ENCODE measurements at regions of chr17 and their contacts with region 1.

Region 1: DNA sequence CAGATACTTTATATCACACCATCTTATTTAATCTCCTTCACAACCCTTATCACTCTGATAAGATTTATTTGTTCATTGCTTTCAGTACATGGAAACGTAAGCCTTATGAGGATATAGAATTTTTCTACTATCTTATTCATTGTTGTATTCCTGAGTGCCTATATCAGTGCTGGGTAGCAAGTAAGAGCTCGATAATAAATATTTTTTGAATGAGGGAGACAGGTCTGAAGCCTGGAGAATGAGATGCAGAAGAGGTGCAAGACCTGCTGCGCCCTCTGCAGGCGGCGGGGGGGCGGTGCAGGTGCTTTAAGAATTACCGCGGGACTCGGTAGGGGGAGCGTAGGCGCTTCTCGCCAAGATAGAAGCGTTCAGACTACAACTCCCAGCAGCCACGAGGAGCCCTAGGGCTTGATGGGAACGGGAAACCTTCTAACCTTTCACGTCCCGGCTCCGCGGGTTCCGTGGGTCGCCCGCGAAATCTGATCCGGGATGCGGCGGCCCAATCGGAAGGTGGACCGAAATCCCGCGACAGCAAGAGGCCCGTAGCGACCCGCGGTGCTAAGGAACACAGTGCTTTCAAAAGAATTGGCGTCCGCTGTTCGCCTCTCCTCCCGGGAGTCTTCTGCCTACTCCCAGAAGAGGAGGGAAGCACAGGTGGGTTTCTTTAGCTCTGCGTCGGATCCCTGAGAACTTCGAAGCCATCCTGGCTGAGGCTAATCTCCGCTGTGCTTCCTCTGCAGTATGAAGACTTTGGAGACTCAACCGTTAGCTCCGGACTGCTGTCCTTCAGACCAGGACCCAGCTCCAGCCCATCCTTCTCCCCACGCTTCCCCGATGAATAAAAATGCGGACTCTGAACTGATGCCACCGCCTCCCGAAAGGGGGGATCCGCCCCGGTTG is at the start of gene WRAP53:
- DNase-seq: peak; percentile 95 to 97 (median 96)
- H3K4me3 ChIP-seq: peak within 1 kb of the TSS; percentile 100
- H3K4me3 Mint-ChIP-seq: peak within 1 kb of the TSS; percentile 93 to 98 (median 96)
- H3K27ac ChIP-seq: peak within 1 kb of the TSS; percentile 99
- H3K27ac Mint-ChIP-seq: peak within 1 kb of the TSS; percentile 98 to 100 (median 99)
- H3K4me1 ChIP-seq: peaks cover 40% of the 10 kb centered on the region
- H3K4me1 Mint-ChIP-seq: peaks cover 18 to 53% (median 40%) of the 10 kb centered on the region in 4 donors
- H3K27me3 ChIP-seq: no peaks in the 10 kb centered on the region
- H3K27me3 Mint-ChIP-seq: no peaks in the 10 kb centered on the region
- total RNA-seq, gene WRAP53: 11.9 to 12.5 TPM

Region 2: GRCh38 chr17:7095625-7096024 is 592.5 kb before region 1 on chr17:
- CTCF ChIA-PET with region 1: no interaction called
- POLR2A ChIA-PET with region 1: no interaction called
- intact Hi-C with region 1: no loop called
- DNase-seq: no peak
- H3K4me3 ChIP-seq: no peak overlapping the region
- H3K4me3 Mint-ChIP-seq: no peak overlapping the region
- H3K27ac ChIP-seq: no peak overlapping the region
- H3K27ac Mint-ChIP-seq: no peak overlapping the region
- H3K4me1 ChIP-seq: no peaks in the 10 kb centered on the region
- H3K4me1 Mint-ChIP-seq: peaks cover 2 to 8% (median 5%) of the 10 kb centered on the region in 4 donors
- H3K27me3 ChIP-seq: peaks cover 3% of the 10 kb centered on the region
- H3K27me3 Mint-ChIP-seq: peaks cover 16 to 17% of the 10 kb centered on the region in 2 donors

Region 3: GRCh38 chr17:7280519-7281429 is 407.4 kb before region 1 on chr17:
- CTCF ChIA-PET with region 1: no interaction called
- POLR2A ChIA-PET with region 1: interaction called, 3 read pairs
- intact Hi-C with region 1: loop called (anchors 1 kb)
- DNase-seq: peak; percentile 82 to 86 (median 85)
- H3K4me3 ChIP-seq: peak overlapping the region; percentile 23 to 58
- H3K4me3 Mint-ChIP-seq: peak overlapping the region; percentile 77 to 90 (median 82)
- H3K27ac ChIP-seq: peak overlapping the region; percentile 41
- H3K27ac Mint-ChIP-seq: peak overlapping the region; percentile 36 to 84 (median 66)
- H3K4me1 ChIP-seq: peaks cover 25% of the 10 kb centered on the region
- H3K4me1 Mint-ChIP-seq: peaks cover 4 to 28% (median 18%) of the 10 kb centered on the region in 4 donors
- H3K27me3 ChIP-seq: peaks cover 10% of the 10 kb centered on the region
- H3K27me3 Mint-ChIP-seq: peaks cover 15 to 19% of the 10 kb centered on the region in 2 donors

Region 4: GRCh38 chr17:7403977-7404736 is 284.0 kb before region 1 on chr17 and contains the start of gene TMEM256:
- CTCF ChIA-PET with region 1: no interaction called
- POLR2A ChIA-PET with region 1: interaction called, 11 read pairs
- intact Hi-C with region 1: loop called (anchors 1 kb)
- DNase-seq: peak; percentile 91 to 98 (median 94)
- H3K4me3 ChIP-seq: peak within 1 kb of the TSS; percentile 73 to 77
- H3K4me3 Mint-ChIP-seq: peak within 1 kb of the TSS; percentile 93 to 98 (median 97)
- H3K27ac ChIP-seq: peak within 1 kb of the TSS; percentile 51
- H3K27ac Mint-ChIP-seq: peak within 1 kb of the TSS; percentile 89 to 99 (median 98)
- H3K4me1 ChIP-seq: peaks cover 17% of the 10 kb centered on the region
- H3K4me1 Mint-ChIP-seq: peaks cover 16 to 40% (median 18%) of the 10 kb centered on the region in 4 donors
- H3K27me3 ChIP-seq: no peaks in the 10 kb centered on the region
- H3K27me3 Mint-ChIP-seq: peaks cover 2% of the 10 kb centered on the region in 2 donors
- total RNA-seq, gene TMEM256: 35.4 to 38.3 TPM

Region 5: GRCh38 chr17:7561028-7561575 is 127.1 kb before region 1 on chr17:
- CTCF ChIA-PET with region 1: interaction called, 8 read pairs
- POLR2A ChIA-PET with region 1: interaction called, 38 read pairs
- intact Hi-C with region 1: loop called (anchors 1 kb)
- DNase-seq: peak; percentile 75 to 85 (median 76)
- H3K4me3 ChIP-seq: peak overlapping the region; percentile 72 to 84
- H3K4me3 Mint-ChIP-seq: peak overlapping the region; percentile 89 to 98 (median 94)
- H3K27ac ChIP-seq: peak overlapping the region; percentile 96
- H3K27ac Mint-ChIP-seq: peak overlapping the region; percentile 95 to 99 (median 97)
- H3K4me1 ChIP-seq: peaks cover 37% of the 10 kb centered on the region
- H3K4me1 Mint-ChIP-seq: peaks cover 25 to 37% (median 30%) of the 10 kb centered on the region in 4 donors
- H3K27me3 ChIP-seq: no peaks in the 10 kb centered on the region
- H3K27me3 Mint-ChIP-seq: no peaks in the 10 kb centered on the region

Region 6: DNA sequence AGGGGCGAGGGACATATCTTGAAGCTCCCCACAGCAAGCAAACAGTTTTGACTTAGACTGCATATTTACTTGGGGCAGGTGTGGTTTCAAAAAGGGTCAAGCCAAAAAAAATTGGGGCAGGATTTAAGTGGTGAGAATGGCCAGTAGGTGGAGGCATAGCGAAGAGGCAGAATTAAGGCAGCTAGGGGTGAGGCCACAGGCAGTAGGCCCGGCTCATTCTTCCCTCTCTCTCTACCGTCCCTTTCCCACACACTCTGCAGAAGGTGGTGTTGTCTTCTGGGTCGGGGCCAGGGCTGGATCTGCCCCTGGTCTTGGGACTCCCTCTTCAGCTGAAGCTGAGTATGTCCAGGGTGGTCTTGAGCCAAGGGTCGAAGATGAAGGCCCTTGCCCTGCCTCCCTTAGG is 55.7 kb before region 1 on chr17:
- CTCF ChIA-PET with region 1: interaction called, 56 read pairs
- POLR2A ChIA-PET with region 1: interaction called, 84 read pairs
- intact Hi-C with region 1: loop called (anchors 1 kb)
- DNase-seq: peak in 4 of 5 donors; percentile 19 to 36 (median 30)
- H3K4me3 ChIP-seq: no peak overlapping the region
- H3K4me3 Mint-ChIP-seq: no peak overlapping the region
- H3K27ac ChIP-seq: no peak overlapping the region
- H3K27ac Mint-ChIP-seq: peak overlapping the region in 1 of 7 donors; percentile 10
- H3K4me1 ChIP-seq: peaks cover 3% of the 10 kb centered on the region
- H3K4me1 Mint-ChIP-seq: peaks cover 1 to 6% (median 4%) of the 10 kb centered on the region in 4 donors
- H3K27me3 ChIP-seq: no peaks in the 10 kb centered on the region
- H3K27me3 Mint-ChIP-seq: no peaks in the 10 kb centered on the region

Region 7: GRCh38 chr17:7856883-7857723 is 168.9 kb after region 1 on chr17 and contains the start of gene NAA38:
- CTCF ChIA-PET with region 1: no interaction called
- POLR2A ChIA-PET with region 1: interaction called, 28 read pairs
- intact Hi-C with region 1: loop called (anchors 1 kb)
- DNase-seq: peak; percentile 97 to 99 (median 98)
- H3K4me3 ChIP-seq: peak within 1 kb of the TSS; percentile 67 to 96
- H3K4me3 Mint-ChIP-seq: no peak within 1 kb of the TSS
- H3K27ac ChIP-seq: peak within 1 kb of the TSS; percentile 81
- H3K27ac Mint-ChIP-seq: no peak within 1 kb of the TSS
- H3K4me1 ChIP-seq: peaks cover 32% of the 10 kb centered on the region
- H3K4me1 Mint-ChIP-seq: peaks cover under 1 to 11% (median 7%) of the 10 kb centered on the region in 4 donors
- H3K27me3 ChIP-seq: no peaks in the 10 kb centered on the region
- H3K27me3 Mint-ChIP-seq: no peaks in the 10 kb centered on the region
- total RNA-seq, gene NAA38: 23.1 to 25.8 TPM

Region 8: DNA sequence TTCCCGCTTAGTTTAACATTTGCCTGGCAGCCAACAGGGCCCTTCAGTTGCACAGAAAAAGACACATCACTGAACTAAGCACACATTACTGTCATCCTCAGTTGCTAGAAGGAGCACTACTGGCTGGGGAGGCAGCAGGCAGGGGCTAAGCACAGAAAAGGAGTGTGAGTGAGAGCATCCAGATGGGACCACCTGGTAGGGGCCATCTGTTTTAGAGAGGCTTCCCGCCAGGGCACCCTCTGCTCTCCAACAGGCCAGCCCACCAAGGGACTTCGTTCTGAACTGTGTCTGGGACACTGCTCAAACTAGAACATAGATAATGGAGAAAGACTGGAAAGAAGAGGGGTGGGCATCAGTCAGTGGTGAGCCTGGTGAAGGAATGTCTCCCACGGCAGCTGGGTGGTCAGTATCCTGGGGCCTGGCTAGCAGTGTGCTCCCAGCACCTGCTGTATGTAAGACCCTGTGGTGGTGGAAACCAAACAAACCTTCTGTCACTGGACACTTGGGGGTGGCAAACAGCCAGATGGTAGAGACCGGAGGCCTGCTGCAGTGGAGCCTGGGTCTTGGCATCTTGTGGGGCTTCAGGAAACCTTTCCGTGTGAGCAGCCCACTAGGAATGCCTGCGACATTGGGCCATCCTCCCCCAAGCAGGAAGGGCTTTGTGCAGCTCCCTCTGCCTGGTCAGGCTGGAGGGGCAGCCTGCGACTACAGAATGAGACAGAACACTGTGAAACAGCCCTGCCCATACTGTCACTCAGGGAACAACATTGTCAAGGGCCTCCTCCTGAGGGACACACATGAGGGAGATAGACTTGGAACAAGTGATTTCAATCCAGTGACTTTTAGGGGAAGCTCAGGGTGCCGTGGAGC is 587.5 kb after region 1 on chr17:
- CTCF ChIA-PET with region 1: no interaction called
- POLR2A ChIA-PET with region 1: no interaction called
- intact Hi-C with region 1: no loop called
- DNase-seq: no peak
- H3K4me3 ChIP-seq: no peak overlapping the region
- H3K4me3 Mint-ChIP-seq: no peak overlapping the region
- H3K27ac ChIP-seq: no peak overlapping the region
- H3K27ac Mint-ChIP-seq: peak overlapping the region in 1 of 7 donors; percentile 53
- H3K4me1 ChIP-seq: no peaks in the 10 kb centered on the region
- H3K4me1 Mint-ChIP-seq: no peaks in the 10 kb centered on the region
- H3K27me3 ChIP-seq: no peaks in the 10 kb centered on the region
- H3K27me3 Mint-ChIP-seq: no peaks in the 10 kb centered on the region

Measured in CD4-positive, alpha-beta memory T cell (primary cell).